Activated B cell treated with CpG ODN at 0.5 μM for 24 hours (primary cell): ENCODE measurements at regions of chr1 and their contacts with region 1.

Region 1: DNA sequence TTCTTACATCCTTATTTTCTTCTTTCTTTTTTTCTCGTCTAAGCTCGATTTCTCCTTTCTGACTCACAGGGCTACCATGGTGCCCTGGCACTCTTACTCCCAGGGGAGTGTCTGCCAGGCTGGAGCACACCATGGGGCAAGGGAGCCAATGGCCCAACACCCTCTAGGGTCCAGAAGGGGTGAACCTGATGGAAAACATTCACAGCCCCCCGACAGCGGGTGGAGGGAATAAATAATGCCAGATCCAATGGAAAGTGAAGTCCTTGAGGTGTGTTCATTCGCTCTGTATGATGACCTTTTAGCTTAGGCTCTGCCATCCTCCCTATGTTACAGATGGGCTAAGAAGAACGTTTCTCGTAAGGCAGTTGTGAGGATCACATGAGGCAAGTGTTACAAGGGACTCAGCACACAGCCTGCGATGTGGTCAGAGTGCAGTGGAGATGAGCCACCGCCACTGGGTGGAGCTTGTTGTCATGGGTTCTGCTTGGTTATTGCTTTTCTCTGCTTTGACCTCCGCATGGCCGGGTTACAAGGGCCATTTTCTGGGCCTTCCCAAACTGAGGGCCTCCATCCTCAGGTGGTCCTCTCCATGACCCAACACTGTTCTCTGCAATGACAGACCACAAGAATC is 3.5 kb upstream of the FCMR start:
- DNase-seq: peak; percentile 63
- ATAC-seq: peak; percentile 55
- H3K4me3 Mint-ChIP-seq: no peak overlapping the region
- H3K27ac Mint-ChIP-seq: no peak overlapping the region
- H3K4me1 Mint-ChIP-seq: peaks cover 33% of the 10 kb centered on the region
- H3K27me3 Mint-ChIP-seq: no peaks in the 10 kb centered on the region
- CTCF ChIP-seq: no peak

Region 2: DNA sequence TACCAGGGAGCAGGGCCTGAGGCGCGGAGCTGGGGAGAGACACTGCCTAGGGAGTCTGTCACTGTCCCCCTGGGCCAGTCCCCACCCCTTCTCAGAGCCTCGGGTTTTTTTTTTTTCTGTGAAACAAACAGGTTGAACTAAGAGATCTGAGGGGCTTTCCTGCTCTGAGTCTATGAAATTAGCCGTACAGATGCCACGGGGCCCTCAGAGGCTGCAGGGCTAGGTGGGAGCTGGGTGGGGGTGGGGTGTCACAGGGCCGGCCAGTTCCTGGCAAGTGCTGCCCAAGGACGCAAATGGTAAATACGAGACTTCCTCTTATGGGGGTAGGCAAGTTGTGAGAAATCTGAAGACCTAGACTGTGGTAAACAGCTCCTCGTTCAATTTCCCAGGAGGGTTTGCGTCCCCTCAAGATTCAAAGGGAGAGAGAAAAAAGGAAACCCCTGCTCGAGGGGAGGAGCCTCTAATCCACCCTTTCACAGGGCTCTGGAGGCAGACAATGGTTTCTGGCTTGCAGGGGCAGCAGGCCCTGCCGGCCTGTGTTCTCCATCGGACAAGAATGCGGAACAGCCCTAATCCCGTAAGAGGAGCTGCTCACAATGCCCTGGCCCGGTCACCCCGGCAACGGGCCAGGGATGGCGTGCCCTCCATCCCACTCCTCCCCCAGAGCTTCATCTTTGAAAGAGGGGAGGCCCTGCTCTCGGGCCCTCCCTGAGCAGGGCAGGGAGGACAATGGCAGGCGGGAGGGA is 1611.5 kb before region 1 on chr1:
- CTCF ChIA-PET with region 1: no interaction called
- POLR2A ChIA-PET with region 1: no interaction called
- intact Hi-C with region 1: loop called (anchors 10 kb)
- DNase-seq: peak; percentile 55
- ATAC-seq: peak; percentile 82
- H3K4me3 Mint-ChIP-seq: peak overlapping the region; percentile 85
- H3K27ac Mint-ChIP-seq: peak overlapping the region; percentile 98
- H3K4me1 Mint-ChIP-seq: peaks cover 95% of the 10 kb centered on the region
- H3K27me3 Mint-ChIP-seq: no peaks in the 10 kb centered on the region
- CTCF ChIP-seq: no peak

Region 3: DNA sequence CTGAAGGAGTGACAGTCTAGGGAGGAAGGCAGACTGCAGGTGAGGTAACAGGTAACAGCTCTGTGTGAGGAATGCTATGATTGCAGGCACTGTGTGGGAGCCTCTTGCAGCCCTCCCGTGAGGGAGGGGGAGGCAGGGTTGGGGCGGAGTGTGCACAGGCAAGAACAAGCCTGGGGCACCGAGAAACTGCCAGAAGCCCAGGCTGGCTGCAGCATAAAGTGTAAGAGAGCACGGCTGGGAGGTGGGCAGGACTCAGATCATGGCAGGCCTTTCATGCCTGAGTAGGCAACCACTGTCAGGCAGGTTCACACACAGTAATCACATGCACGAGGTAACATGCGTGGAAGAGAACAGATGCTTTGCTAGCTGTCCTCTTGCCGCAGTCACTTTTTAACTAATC is 883.6 kb before region 1 on chr1:
- CTCF ChIA-PET with region 1: no interaction called
- POLR2A ChIA-PET with region 1: interaction called, 3 read pairs
- intact Hi-C with region 1: loop called (anchors 10 kb)
- DNase-seq: peak; percentile 36
- ATAC-seq: peak; percentile 90
- H3K4me3 Mint-ChIP-seq: peak overlapping the region; percentile 76
- H3K27ac Mint-ChIP-seq: peak overlapping the region; percentile 89
- H3K4me1 Mint-ChIP-seq: peaks cover 81% of the 10 kb centered on the region
- H3K27me3 Mint-ChIP-seq: no peaks in the 10 kb centered on the region
- CTCF ChIP-seq: no peak

Region 4: DNA sequence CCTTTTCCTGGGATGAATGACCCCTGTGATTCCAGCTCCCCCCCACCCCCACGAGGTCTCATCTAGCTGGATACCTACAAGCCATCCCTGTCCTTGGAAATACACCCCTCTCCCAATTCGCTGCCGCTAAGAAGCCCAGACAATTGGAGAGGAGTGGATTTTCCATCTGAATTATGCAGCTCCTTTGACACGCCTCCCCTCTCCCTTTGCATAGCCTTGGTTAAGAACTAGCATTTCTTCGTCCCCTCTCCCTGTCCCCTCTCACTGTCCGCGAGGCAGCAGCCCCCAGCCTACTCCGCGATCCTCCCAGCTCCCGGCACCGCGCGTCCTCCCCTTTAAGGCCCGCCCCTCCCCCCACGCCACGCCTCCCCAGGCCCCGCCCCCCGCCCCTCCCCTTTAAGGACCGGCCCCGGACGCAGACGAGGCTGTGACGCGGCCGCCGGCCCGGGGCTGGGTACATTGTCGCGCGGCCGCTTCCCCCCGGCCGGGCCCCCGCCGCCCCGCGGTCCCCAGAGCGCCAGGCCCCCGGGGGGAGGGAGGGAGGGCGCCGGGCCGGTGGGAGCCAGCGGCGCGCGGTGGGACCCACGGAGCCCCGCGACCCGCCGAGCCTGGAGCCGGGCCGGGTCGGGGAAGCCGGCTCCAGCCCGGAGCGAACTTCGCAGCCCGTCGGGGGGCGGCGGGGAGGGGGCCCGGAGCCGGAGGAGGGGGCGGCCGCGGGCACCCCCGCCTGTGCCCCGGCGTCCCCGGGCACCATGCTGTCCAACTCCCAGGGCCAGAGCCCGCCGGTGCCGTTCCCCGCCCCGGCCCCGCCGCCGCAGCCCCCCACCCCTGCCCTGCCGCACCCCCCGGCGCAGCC is 240.5 kb before region 1 on chr1 and contains the start of gene MAPKAPK2:
- CTCF ChIA-PET with region 1: no interaction called
- POLR2A ChIA-PET with region 1: interaction called, 4 read pairs
- intact Hi-C with region 1: loop called (anchors 2 kb)
- DNase-seq: peak; percentile 72
- ATAC-seq: peak; percentile 65
- H3K4me3 Mint-ChIP-seq: peak within 1 kb of the TSS; percentile 94
- H3K27ac Mint-ChIP-seq: peak within 1 kb of the TSS; percentile 90
- H3K4me1 Mint-ChIP-seq: peaks cover 80% of the 10 kb centered on the region
- H3K27me3 Mint-ChIP-seq: no peaks in the 10 kb centered on the region
- CTCF ChIP-seq: no peak
- total RNA-seq, gene MAPKAPK2: 71.2 and 72.1 TPM in 2 replicates

Region 5: DNA sequence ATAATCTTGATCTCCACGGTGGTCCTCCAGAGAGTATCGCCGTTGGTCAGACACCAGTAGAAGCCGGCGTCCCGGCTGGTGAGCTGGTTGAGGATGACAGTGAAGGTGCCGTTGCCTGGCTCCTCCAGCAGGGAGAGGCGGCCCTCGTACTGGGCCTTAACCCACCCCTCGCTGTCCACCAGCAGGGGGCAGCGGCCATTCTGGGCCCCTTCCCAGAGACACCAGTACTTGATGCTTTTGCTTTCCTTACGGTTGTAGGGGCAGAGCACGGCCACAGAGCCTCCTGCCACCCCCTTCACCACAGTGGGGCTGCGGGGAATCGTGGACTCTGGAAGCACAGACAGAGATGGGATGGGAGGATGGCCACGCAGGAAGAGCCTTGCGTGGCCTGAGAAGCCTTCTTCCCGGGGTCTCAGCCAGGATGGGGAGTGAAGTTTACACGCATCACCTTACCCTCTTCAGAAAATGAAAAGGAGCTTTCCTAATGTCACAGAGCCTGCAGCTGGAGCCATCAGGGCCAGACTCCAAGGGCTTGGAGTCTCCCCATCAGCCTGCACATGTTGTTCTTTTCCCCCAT is 10.4 kb after region 1 on chr1:
- CTCF ChIA-PET with region 1: interaction called, 383 read pairs
- POLR2A ChIA-PET with region 1: interaction called, 267 read pairs
- intact Hi-C with region 1: loop called (anchors 1 kb)
- DNase-seq: peak; percentile 41
- ATAC-seq: no peak
- H3K4me3 Mint-ChIP-seq: no peak overlapping the region
- H3K27ac Mint-ChIP-seq: no peak overlapping the region
- H3K4me1 Mint-ChIP-seq: peaks cover 34% of the 10 kb centered on the region
- H3K27me3 Mint-ChIP-seq: no peaks in the 10 kb centered on the region
- CTCF ChIP-seq: no peak

Region 6: GRCh38 chr1:206955476-206956451 is 30.5 kb after region 1 on chr1:
- CTCF ChIA-PET with region 1: no interaction called
- POLR2A ChIA-PET with region 1: no interaction called
- intact Hi-C with region 1: no loop called
- DNase-seq: no peak
- ATAC-seq: peak; percentile 75
- H3K4me3 Mint-ChIP-seq: no peak overlapping the region
- H3K27ac Mint-ChIP-seq: peak overlapping the region; percentile 18
- H3K4me1 Mint-ChIP-seq: peaks cover 35% of the 10 kb centered on the region
- H3K27me3 Mint-ChIP-seq: no peaks in the 10 kb centered on the region
- CTCF ChIP-seq: no peak

Region 7: DNA sequence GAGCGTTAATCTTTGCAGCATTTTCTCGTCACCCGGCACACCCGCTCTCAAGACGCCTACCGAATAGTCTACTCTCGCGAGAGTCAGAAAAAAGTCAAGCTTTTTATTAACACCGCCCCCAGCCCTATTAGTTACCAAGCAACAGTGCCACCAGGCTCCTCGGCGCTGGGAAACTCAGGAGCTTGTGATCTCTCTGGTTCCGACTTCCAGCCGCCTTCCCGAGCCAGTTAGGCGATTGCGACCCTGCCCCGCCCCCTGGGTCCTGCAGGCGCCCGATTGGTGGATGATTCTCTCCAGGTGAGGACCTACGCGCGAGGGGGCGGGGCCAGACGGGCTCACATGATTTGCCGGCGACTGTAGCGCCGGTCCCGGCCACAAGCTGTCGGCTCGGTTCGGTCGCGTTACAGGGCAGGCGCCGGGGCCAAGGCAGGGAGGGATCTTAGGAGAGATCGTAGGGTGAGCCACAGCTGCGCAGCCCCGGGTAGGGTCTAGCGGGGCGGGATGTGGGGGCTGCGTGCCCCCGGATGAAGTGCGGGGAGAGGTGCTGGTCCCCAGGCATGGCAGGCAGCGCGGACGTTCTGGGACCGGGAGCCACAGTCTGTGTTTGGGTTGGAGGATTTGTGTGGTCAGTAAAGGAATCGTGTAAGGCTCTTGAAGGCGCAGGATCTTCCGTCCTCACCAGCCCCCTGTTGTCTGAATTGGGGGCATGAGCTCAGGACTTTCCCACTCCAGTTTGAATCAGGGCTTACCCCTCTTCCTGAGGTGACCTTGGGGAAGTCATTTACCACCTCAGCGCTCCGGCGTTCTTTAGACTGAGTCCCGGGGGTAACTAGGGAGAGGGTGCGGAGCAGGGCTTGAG is 127.9 kb after region 1 on chr1 and contains the start of gene PFKFB2:
- CTCF ChIA-PET with region 1: no interaction called
- POLR2A ChIA-PET with region 1: no interaction called
- intact Hi-C with region 1: loop called (anchors 5 kb)
- DNase-seq: peak; percentile 94
- ATAC-seq: peak; percentile 86
- H3K4me3 Mint-ChIP-seq: peak within 1 kb of the TSS; percentile 98
- H3K27ac Mint-ChIP-seq: peak within 1 kb of the TSS; percentile 98
- H3K4me1 Mint-ChIP-seq: peaks cover 56% of the 10 kb centered on the region
- H3K27me3 Mint-ChIP-seq: no peaks in the 10 kb centered on the region
- CTCF ChIP-seq: no peak
- total RNA-seq, gene PFKFB2: 7.6 and 10.1 TPM in 2 replicates

Region 8: DNA sequence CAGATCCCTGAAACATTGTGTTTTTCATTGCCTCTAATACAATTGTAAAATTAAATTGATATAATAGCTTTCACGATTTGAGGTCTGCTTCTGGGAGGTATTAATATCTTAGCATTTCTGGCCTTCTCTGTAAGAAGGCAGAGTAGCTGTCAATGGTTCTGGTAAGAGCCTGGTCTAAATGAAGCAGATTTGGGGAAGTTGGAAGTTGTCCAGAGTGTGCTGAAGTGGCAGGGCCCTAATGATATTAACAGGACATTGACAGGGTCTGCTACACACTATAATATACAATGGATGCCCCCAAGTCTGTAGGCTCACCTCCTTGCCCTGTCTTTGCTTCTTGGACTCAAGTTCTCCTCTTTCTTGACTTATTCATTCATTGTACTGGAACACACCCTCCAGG is 278.3 kb after region 1 on chr1:
- CTCF ChIA-PET with region 1: no interaction called
- POLR2A ChIA-PET with region 1: no interaction called
- intact Hi-C with region 1: no loop called
- DNase-seq: no peak
- ATAC-seq: no peak
- H3K4me3 Mint-ChIP-seq: no peak overlapping the region
- H3K27ac Mint-ChIP-seq: no peak overlapping the region
- H3K4me1 Mint-ChIP-seq: peaks cover 5% of the 10 kb centered on the region
- H3K27me3 Mint-ChIP-seq: no peaks in the 10 kb centered on the region
- CTCF ChIP-seq: no peak

Region 9: GRCh38 chr1:207414606-207415108 is 489.4 kb after region 1 on chr1:
- CTCF ChIA-PET with region 1: no interaction called
- POLR2A ChIA-PET with region 1: no interaction called
- intact Hi-C with region 1: loop called (anchors 5 kb)
- DNase-seq: no peak
- ATAC-seq: peak; percentile 76
- H3K4me3 Mint-ChIP-seq: peak overlapping the region; percentile 76
- H3K27ac Mint-ChIP-seq: peak overlapping the region; percentile 96
- H3K4me1 Mint-ChIP-seq: peaks cover 83% of the 10 kb centered on the region
- H3K27me3 Mint-ChIP-seq: no peaks in the 10 kb centered on the region
- CTCF ChIP-seq: no peak

Region 10: GRCh38 chr1:207619871-207620542 is 694.8 kb after region 1 on chr1:
- CTCF ChIA-PET with region 1: no interaction called
- POLR2A ChIA-PET with region 1: no interaction called
- intact Hi-C with region 1: no loop called
- DNase-seq: peak; percentile 25
- ATAC-seq: peak; percentile 99
- H3K4me3 Mint-ChIP-seq: no peak overlapping the region
- H3K27ac Mint-ChIP-seq: no peak overlapping the region
- H3K4me1 Mint-ChIP-seq: peaks cover 3% of the 10 kb centered on the region
- H3K27me3 Mint-ChIP-seq: no peaks in the 10 kb centered on the region
- CTCF ChIP-seq: peak; percentile 86